ENCODE measurements at regions of chr1 and their contacts with region 1.

Region 1: DNA sequence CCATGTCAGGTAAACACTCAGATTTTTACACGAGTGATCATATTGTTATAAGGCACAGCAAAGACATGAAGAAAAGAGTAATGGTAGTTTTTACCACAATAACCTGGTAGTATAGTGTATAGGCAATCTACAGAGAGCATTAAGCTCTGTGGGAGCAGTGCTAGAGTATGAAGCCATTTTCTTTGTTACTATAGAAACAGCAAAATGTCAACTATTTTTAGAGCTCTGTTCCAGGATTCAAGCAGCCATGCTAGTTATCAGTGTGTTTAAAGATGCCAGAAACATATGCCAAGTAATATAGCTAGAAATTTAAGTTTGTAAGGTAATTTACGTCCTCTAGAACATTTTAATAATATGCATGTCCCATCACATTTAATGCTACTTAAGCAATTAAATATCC is 77.6 kb upstream of the RGS18 start:
- DNase-seq: no peak
- H3K4me3 ChIP-seq: no peak overlapping the region
- H3K27ac ChIP-seq: no peak overlapping the region
- H3K4me1 ChIP-seq: no peaks in the 10 kb centered on the region
- H3K27me3 ChIP-seq: no peaks in the 10 kb centered on the region
- CTCF ChIP-seq: no peak
- POLR2A ChIP-seq: no peak

Region 2: DNA sequence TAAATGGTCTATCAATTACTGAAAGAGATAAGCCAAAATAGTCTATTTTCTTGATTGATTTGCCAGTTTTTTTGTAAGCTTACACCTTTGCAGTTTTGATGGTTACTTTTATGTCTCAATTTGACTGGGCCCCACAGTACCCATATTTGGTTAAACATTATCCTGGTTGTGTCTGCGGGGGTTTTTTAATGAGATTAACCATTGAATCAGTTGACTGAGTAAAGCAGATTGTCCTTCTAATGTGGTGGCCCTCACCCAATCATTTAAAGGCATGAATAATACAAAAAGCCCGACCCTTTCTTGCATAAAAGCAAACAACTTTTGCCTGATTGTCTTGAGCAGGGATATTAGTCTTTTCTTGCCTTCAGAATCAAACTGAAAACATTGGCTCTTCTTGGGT is 572.4 kb before region 1 on chr1:
- intact Hi-C with region 1: no loop called
- DNase-seq: no peak
- H3K4me3 ChIP-seq: no peak overlapping the region
- H3K27ac ChIP-seq: no peak overlapping the region
- H3K4me1 ChIP-seq: no peaks in the 10 kb centered on the region
- H3K27me3 ChIP-seq: no peaks in the 10 kb centered on the region
- CTCF ChIP-seq: no peak
- POLR2A ChIP-seq: no peak

Region 3: DNA sequence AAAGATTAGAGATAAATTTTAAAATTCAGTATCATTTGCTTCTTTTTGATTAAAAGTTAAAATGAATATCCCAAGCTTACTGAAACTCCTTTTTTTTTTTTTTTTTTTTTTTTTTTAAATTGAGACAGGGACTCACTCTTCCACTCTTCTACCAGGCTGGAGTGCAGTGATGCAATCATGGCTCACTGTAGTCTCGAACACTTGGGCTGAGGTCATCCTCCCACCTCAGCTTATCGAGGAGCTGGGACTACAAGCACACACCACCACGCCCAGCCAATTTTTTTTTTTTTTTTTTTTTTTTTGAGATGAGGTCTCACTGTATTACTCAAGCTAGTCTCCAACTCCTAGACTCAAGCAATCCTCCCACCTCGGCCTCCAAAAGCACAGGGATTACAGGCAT is 14.5 kb before region 1 on chr1:
- intact Hi-C with region 1: loop called (anchors 1 kb)
- DNase-seq: no peak
- H3K4me3 ChIP-seq: no peak overlapping the region
- H3K27ac ChIP-seq: no peak overlapping the region
- H3K4me1 ChIP-seq: no peaks in the 10 kb centered on the region
- H3K27me3 ChIP-seq: no peaks in the 10 kb centered on the region
- CTCF ChIP-seq: no peak
- POLR2A ChIP-seq: no peak